A673 (cell line): ENCODE measurements at regions of chr14 and their contacts with region 1.

Region 1: DNA sequence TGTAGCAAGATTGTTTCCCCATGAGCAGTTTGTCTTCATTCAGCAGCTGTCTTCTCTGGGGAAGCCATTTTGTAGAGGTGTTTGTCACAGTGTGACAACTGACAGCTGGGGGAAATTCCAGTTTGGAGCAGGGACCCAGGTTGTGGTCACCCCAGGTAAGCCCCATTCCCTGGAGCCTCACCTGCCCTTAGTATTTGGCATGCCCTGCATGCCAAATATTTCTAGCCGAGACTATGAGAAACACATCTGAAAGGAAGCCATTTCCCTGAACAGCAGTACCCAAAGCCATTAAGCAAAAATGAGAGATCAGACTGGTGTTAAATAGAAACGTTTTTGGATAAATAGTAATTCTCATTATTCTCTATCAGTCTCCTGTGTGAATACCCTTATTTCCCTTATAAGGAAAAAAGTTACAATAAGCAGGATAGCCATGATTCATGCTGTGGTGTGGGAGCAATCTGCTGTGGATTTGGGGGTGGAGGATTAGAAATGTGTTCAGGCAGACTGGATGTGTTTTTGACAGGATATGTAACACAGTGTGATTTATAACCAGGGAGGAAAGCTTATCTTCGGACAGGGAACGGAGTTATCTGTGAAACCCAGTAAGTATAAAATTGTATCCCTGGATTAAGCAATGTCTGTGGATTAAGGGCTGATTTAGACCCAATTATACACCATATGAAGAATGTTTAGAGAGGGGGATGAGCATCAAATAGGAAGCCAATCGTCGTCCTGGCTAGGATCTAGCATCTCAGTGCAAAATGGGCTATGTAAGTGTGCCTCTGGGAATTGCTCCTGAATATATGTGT is 68.9 kb downstream of the DAD1 start:
- DNase-seq: peak; percentile 83
- H3K4me3 ChIP-seq: no peak overlapping the region
- H3K27ac ChIP-seq: peak overlapping the region; percentile 83
- H3K4me1 ChIP-seq: peaks cover 84% of the 10 kb centered on the region
- H3K27me3 ChIP-seq: no peaks in the 10 kb centered on the region
- CTCF ChIP-seq: no peak

Region 2: DNA sequence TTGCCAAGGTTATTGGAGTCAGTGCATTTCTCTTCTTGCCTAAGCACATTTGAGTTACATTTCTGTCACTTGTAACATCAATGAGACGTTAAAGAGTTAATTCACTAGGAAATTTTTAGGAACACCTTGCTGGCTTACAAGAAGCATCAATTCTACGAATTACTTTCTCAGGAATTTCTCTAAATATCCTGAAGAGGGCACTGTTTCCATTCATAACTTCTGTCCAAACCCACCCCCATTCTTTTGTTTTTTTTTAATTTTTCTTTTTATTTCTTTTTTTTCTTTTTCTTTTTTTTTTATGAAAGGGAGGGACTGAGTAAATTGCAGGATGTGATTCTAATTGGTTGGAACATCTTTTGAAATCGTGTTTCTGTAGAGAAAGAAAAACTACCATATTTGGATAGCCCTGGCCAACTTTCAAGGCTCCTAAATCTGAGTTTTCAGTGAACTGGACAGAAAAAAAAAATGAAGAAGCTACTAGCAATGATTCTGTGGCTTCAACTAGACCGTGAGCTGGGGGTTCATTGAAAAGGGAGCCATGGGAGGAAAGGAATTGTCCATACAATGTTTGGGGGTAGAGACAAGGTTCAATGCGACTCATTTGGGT is 216.4 kb before region 1 on chr14:
- CTCF ChIA-PET with region 1: no interaction called
- POLR2A ChIA-PET with region 1: no interaction called
- intact Hi-C with region 1: no loop called
- DNase-seq: peak; percentile 63
- H3K4me3 ChIP-seq: peak overlapping the region; percentile 15
- H3K27ac ChIP-seq: peak overlapping the region; percentile 78
- H3K4me1 ChIP-seq: peaks cover 29% of the 10 kb centered on the region
- H3K27me3 ChIP-seq: no peaks in the 10 kb centered on the region
- CTCF ChIP-seq: peak; percentile 74

Region 3: DNA sequence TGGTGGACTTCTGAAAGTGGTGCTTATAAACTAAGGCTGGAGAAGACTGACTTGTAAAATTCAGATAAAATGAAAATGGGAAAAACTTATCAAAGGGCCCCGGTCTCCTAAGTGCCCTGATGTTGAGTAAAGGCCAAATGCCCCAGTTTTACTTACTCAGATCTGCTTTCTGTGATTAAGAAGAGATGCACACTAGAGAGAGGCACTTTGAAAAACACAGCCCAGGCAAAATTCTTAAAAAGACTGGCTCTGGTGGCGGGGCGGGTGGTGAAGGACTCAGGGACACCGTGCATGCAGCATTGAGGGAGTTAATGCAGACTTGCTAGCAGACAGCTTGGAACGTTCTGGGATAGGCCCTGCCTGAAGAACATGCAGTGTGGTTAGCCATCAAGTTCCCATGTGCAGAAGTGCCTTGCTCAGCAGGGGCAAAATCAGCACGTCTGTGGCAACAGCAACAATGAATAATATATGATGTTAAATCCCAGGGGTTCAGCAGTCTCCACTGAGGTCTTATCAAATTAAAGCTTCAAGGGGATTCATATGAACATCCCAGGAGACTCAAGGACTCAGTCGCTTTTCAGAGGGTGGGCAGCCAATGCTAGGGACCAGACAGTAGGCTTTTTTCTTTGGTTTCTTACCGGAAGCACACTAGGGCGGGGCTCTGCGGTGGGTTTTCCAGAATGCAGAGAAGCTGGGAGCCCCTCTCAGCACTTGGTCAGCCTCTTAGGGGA is 36.1 kb before region 1 on chr14:
- CTCF ChIA-PET with region 1: interaction called, 4 read pairs
- POLR2A ChIA-PET with region 1: no interaction called
- intact Hi-C with region 1: loop called (anchors 5 kb)
- DNase-seq: peak; percentile 91
- H3K4me3 ChIP-seq: no peak overlapping the region
- H3K27ac ChIP-seq: peak overlapping the region; percentile 79
- H3K4me1 ChIP-seq: peaks cover 100% of the 10 kb centered on the region
- H3K27me3 ChIP-seq: no peaks in the 10 kb centered on the region
- CTCF ChIP-seq: no peak

Region 4: DNA sequence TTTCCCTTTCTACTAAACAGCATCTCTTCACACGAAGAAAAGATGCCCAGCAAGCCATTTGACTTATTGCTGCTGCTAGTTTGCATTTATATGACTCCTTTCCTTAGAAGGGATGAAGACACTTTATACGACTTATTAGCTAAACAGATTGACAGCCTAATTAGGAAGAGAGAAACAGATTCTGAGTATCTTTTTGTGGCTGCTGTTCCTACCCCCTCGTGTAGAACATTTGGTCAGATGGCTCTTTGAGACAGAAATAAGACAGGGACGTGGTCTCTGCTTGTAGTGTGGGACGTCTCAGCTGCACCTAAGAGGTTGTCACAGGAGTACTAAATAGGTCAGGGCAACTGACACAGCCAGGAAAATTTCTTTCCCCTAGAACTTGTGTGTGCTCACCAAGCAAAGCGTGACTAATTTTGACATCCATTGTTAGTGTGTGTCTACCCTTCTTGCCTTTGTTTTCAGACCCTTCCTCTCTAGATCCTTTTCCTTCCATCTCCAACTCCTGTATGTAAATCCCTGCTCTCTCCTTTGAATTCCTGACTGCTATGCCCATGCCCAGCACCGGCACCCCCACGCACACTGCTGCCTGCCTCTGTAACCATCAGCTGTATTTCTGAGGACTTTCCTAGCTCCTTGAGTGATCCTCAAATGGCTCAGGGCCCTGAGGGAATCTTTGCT is 14.2 kb before region 1 on chr14:
- CTCF ChIA-PET with region 1: no interaction called
- POLR2A ChIA-PET with region 1: interaction called, 11 read pairs
- intact Hi-C with region 1: no loop called
- DNase-seq: peak; percentile 85
- H3K4me3 ChIP-seq: peak overlapping the region; percentile 21
- H3K27ac ChIP-seq: peak overlapping the region; percentile 89
- H3K4me1 ChIP-seq: peaks cover 73% of the 10 kb centered on the region
- H3K27me3 ChIP-seq: no peaks in the 10 kb centered on the region
- CTCF ChIP-seq: no peak